ENCODE measurements at regions of chr17 and their contacts with region 1.

Region 1: GRCh38 chr17:77331301-77331864 is 190.6 kb downstream of the SEC14L1 start:
- DNase-seq: peak; percentile 92 to 93
- H3K4me3 ChIP-seq: no peak overlapping the region
- H3K27ac ChIP-seq: peak overlapping the region; percentile 55 to 76
- H3K4me1 ChIP-seq: peaks cover 0 to 4% of the 10 kb centered on the region in 2 donors
- H3K27me3 ChIP-seq: no peaks in the 10 kb centered on the region
- CTCF ChIP-seq: peak; percentile 95 to 98 (median 96)
- POLR2A ChIP-seq: no peak

Region 2: DNA sequence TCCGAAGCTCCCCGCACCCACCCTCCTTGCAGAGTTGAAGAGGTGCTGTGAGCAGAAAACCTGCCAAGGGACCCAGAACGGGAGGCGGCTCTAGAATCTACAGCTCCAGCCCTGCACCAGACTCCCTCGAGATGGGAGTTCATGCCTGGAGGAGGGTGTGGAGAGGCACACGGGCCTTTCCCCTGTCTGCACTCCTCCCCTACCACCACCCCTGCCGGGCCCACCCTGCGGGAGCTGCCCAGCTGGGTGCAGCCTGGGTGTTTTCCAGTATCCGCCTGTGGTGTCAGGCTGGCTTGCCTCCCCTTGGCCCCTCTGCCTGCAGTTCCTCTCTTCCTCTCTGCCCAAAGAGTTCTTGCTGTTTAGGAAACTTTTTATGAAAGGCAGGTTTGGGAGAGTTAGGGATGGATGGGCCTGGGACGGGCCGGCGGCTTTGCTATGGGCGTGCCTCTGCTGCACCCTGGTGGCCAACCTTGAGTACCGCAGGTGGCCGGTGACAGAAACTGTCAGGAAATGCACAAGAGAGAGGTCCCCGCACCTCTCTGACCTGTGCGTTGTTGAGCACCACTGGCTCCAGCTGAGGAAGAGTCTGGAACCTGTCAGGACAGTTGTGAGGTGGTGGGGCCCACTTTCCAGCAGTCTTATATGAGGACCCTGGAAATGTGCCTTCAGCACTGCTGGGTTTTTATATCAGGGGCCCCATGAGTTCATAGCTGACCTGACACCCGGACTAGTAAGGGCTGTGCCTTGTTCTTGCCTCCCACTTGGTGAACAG is 163.5 kb after region 1 on chr17:
- intact Hi-C with region 1: loop called (anchors 2 kb)
- DNase-seq: peak; percentile 81 to 84
- H3K4me3 ChIP-seq: no peak overlapping the region
- H3K27ac ChIP-seq: peak overlapping the region; percentile 67 to 68
- H3K4me1 ChIP-seq: peaks cover under 1 to 10% of the 10 kb centered on the region in 2 donors
- H3K27me3 ChIP-seq: no peaks in the 10 kb centered on the region
- CTCF ChIP-seq: peak; percentile 96 to 99 (median 98)
- POLR2A ChIP-seq: no peak

Region 3: GRCh38 chr17:77924757-77925336 is 593.5 kb after region 1 on chr17:
- intact Hi-C with region 1: no loop called
- DNase-seq: peak in 1 of 2 donors; percentile 67
- H3K4me3 ChIP-seq: no peak overlapping the region
- H3K27ac ChIP-seq: no peak overlapping the region
- H3K4me1 ChIP-seq: no peaks in the 10 kb centered on the region
- H3K27me3 ChIP-seq: no peaks in the 10 kb centered on the region
- CTCF ChIP-seq: no peak
- POLR2A ChIP-seq: no peak

Region 4: GRCh38 chr17:78032166-78032565 is 700.8 kb after region 1 on chr17:
- intact Hi-C with region 1: no loop called
- DNase-seq: no peak
- H3K4me3 ChIP-seq: no peak overlapping the region
- H3K27ac ChIP-seq: peak overlapping the region; percentile 36 to 57
- H3K4me1 ChIP-seq: peaks cover 0 to 10% of the 10 kb centered on the region in 2 donors
- H3K27me3 ChIP-seq: no peaks in the 10 kb centered on the region
- CTCF ChIP-seq: no peak
- POLR2A ChIP-seq: no peak